GM12878 (cell line): ENCODE measurements at regions of chr4 and their contacts with region 1.

Region 1: GRCh38 chr4:61094854-61095598 is 105.1 kb upstream of the ADGRL3 start:
- DNase-seq: no peak
- ATAC-seq: no peak
- H3K4me3 ChIP-seq: no peak overlapping the region
- H3K27ac ChIP-seq: no peak overlapping the region
- H3K4me1 ChIP-seq: no peaks in the 10 kb centered on the region
- H3K27me3 ChIP-seq: no peaks in the 10 kb centered on the region
- CTCF ChIP-seq: no peak
- EP300 ChIP-seq: no peak
- POLR2A ChIP-seq: no peak
- RAD21 ChIP-seq: no peak

Region 2: GRCh38 chr4:60934566-60935295 is 160.3 kb before region 1 on chr4:
- CTCF ChIA-PET with region 1: no interaction called
- POLR2A ChIA-PET with region 1: interaction called, 10 read pairs
- RAD21 ChIA-PET with region 1: no interaction called
- SMC1A ChIA-PET with region 1: no interaction called
- in situ Hi-C with region 1: no loop called
- intact Hi-C with region 1: no loop called
- DNase-seq: no peak
- ATAC-seq: no peak
- H3K4me3 ChIP-seq: no peak overlapping the region
- H3K27ac ChIP-seq: no peak overlapping the region
- H3K4me1 ChIP-seq: no peaks in the 10 kb centered on the region
- H3K27me3 ChIP-seq: no peaks in the 10 kb centered on the region
- CTCF ChIP-seq: no peak
- EP300 ChIP-seq: no peak
- POLR2A ChIP-seq: no peak
- RAD21 ChIP-seq: no peak